ENCODE measurements at regions of chr22 and their contacts with region 1.

Region 1: DNA sequence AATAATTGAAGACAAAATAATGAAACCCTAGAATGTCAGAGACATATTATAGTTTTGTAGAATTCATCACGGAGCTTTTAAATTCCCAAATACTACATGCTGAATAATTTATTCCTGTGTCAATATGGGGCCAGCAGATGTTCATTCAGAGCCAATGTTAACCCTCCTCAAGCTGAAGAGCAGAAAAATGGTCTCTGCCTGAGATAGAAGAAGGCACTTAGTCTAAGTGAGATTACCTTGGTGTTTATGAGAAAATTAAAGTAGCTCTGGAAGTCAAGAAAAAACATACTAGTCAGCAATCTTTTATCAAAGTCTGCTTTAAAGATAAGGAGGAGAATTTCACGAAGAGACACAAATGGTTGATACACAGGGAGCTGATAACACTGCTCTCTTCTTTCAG is 328.2 kb downstream of the TTC28 start:
- DNase-seq: no peak
- ATAC-seq: no peak

Region 2: GRCh38 chr22:28424427-28425080 is 73.1 kb after region 1 on chr22:
- intact Hi-C with region 1: loop called (anchors 10 kb)
- DNase-seq: no peak
- ATAC-seq: no peak

Measured in Right ventricle myocardium superior (tissue), 1 donor.